AG04450 (cell line): ENCODE measurements at regions of chr1 and their contacts with region 1.

Region 1: GRCh38 chr1:36420836-36421664 is 23.3 kb upstream of the LSM10 start:
- DNase-seq: peak; percentile 61
- H3K4me3 ChIP-seq: no peak overlapping the region
- H3K27ac ChIP-seq: no peak overlapping the region
- H3K27me3 ChIP-seq: no peaks in the 10 kb centered on the region
- CTCF ChIP-seq: peak; percentile 98

Region 2: DNA sequence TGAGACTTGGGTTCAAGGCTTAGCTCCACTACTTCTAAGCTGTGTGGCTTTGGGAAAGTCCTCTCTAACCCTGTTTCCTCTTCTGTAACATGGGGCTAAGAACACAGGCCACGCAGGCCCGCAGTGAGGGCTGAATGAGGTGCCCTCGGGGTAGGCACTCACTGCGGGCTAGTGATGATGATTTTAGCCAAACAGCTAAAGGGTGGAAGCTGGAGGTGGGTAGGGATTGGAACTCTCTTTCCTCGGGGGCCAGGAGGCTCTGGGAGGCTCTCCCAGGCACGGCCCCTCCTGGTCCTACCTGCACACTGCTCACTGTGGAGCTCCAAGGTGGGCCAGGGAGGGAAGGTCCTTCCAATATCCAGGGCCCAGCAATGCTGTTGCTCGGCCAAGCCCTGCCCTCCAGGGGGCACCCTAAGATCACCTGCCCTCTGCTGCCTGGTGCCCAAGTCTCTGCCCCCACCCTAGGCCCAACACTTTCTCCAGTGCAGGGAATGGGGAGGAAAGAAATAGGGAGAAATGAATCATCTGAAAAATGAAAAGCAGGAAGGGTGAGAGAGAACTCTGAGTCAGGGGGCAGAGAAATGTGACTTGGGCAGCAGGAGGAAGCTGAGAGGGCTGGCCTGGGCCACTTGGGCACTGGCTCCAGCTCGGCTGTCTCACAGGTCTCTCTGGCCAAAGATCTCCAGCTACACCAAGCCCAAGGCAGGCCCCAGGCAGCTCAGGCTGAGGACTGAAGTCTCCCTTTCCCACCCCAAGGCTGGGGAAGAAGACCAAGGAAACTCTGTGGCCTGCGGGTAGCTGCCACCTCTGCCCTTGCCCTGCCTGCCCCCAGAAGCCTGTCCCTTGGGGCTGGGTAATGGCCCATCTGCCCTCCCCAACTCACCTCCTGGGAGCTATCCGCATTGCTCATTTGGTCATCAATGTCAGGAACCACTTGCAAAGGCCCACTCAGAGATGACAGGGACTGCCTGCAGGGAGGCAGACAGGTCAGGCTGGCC is 78.3 kb before region 1 on chr1:
- CTCF ChIA-PET with region 1: interaction called, 34 read pairs
- POLR2A ChIA-PET with region 1: interaction called, 4 read pairs
- DNase-seq: no peak
- H3K4me3 ChIP-seq: no peak overlapping the region
- H3K27ac ChIP-seq: peak overlapping the region; percentile 65
- H3K27me3 ChIP-seq: no peaks in the 10 kb centered on the region
- CTCF ChIP-seq: peak; percentile 64

Region 3: DNA sequence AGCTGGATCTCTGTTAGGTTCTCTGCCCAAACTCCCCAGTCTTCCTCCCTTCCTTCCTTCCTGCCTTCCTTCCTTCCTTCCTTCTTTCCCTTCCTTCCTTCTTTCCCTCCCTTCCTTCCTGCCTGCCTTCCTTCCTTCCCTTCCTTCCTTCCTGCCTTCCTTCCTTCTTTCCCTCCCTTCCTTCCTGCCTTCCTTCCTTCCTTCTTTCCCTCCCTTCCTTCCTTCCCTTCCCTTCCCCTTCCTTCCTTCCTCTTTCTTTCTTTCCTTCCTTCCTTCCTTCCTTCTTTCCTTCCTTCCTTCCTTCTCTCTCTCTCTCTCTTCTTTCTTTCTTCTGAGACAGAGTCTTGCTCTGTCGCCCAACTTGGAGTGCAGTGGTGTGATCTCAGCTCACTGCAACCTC is 14.6 kb before region 1 on chr1:
- CTCF ChIA-PET with region 1: interaction called, 12 read pairs
- POLR2A ChIA-PET with region 1: no interaction called
- DNase-seq: no peak
- H3K4me3 ChIP-seq: no peak overlapping the region
- H3K27ac ChIP-seq: no peak overlapping the region
- H3K27me3 ChIP-seq: no peaks in the 10 kb centered on the region
- CTCF ChIP-seq: no peak